ENCODE measurements at regions of chr1 and their contacts with region 1.

Region 1: DNA sequence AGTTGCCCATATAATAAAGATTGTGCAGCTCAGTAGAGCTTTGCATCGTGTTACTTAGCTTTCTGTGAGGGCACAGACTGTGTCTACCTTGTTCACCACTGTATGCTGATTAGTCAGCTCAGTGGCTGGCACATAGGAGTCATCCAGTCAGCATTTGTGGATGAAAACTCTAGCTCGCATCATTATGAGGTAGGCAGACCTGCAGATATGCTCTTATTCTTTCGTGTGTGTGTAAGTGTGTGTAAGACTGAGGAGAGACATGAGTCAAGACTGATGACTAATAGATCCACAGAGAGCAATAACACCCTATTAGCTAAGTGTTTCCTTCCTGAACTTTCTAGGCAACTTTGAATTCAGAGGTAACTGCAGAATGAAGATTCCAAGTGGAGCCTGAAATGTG is 17.1 kb downstream of the TTF2 start:
- DNase-seq: no peak

Region 2: DNA sequence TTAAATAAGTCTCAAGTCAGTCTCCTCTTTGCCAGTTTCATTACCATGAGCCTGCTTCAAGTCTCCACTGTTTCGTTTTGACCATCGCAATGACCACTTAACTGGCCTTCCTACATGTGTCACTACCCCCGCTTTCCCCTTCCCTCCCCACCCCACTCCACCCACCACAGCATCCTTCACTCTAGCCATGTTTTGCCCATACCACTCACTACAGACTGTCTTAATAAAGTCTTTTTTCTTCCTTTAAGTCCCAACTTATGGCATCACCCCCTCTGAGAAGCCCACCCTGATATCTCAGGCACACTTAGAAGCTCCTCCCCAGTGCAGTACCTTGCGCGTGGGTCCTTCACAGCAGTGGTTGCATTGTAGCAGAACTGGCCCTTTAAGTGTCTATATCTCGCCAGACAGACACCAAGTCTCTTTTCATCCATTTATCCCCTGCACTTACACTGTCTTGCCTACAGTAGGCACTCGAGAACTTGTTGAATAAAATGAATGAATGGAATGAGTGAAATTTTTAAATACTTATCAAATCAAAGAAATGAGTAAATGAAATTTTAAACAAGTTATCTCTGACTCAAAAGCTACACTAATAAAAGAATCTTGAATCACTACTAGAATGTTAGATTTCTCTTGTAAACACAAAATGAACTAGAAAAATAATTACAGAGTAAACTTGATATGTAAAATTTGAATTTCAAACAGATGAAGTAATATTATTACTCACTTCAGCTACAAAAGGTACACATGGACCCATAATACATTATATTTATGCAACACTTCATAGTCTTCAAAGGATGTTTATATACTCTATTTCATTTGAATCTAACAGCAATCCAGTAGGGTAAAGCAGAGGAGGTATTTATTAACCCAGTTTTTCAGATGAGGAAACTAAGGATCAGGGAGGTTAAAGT is 235.2 kb after region 1 on chr1:
- CTCF ChIA-PET with region 1: no interaction called
- POLR2A ChIA-PET with region 1: no interaction called
- DNase-seq: peak; percentile 68

Region 3: GRCh38 chr1:117427297-117427696 is 350.0 kb after region 1 on chr1:
- CTCF ChIA-PET with region 1: interaction called, 11 read pairs
- POLR2A ChIA-PET with region 1: no interaction called
- DNase-seq: no peak